ENCODE measurements at regions of chr1 and their contacts with region 1.

Region 1: DNA sequence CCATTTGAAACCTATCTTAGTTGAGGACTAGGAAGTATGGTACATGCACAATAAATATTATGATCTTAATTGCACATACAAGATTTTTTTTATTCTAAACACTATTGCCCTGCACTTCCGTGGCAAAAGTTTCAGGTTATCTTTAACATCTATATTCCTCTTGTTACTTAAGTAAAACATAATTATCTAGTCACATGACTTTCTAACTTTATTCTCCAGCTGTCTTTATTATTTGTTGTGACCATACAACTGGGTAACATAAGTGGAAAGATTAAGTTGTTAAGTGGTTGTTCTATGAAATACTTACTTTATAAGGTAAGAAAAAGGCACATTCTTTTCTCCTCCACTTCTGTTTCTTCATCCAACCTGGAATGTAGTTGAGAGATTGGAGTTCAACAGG is 566.5 kb upstream of the PRMT6 start:
- DNase-seq: no peak
- H3K4me3 Mint-ChIP-seq: no peak overlapping the region
- H3K27ac Mint-ChIP-seq: no peak overlapping the region
- H3K4me1 Mint-ChIP-seq: no peaks in the 10 kb centered on the region
- H3K27me3 Mint-ChIP-seq: no peaks in the 10 kb centered on the region

Region 2: GRCh38 chr1:106524631-106525030 is 34.6 kb after region 1 on chr1:
- intact Hi-C with region 1: loop called (anchors 1 kb)
- DNase-seq: no peak
- H3K4me3 Mint-ChIP-seq: no peak overlapping the region
- H3K27ac Mint-ChIP-seq: no peak overlapping the region
- H3K4me1 Mint-ChIP-seq: no peaks in the 10 kb centered on the region
- H3K27me3 Mint-ChIP-seq: no peaks in the 10 kb centered on the region

Region 3: GRCh38 chr1:106785176-106785575 is 295.2 kb after region 1 on chr1:
- intact Hi-C with region 1: no loop called
- DNase-seq: no peak
- H3K4me3 Mint-ChIP-seq: no peak overlapping the region
- H3K27ac Mint-ChIP-seq: no peak overlapping the region
- H3K4me1 Mint-ChIP-seq: no peaks in the 10 kb centered on the region
- H3K27me3 Mint-ChIP-seq: no peaks in the 10 kb centered on the region